ENCODE measurements at regions of chr6 and their contacts with region 1.

Region 1: DNA sequence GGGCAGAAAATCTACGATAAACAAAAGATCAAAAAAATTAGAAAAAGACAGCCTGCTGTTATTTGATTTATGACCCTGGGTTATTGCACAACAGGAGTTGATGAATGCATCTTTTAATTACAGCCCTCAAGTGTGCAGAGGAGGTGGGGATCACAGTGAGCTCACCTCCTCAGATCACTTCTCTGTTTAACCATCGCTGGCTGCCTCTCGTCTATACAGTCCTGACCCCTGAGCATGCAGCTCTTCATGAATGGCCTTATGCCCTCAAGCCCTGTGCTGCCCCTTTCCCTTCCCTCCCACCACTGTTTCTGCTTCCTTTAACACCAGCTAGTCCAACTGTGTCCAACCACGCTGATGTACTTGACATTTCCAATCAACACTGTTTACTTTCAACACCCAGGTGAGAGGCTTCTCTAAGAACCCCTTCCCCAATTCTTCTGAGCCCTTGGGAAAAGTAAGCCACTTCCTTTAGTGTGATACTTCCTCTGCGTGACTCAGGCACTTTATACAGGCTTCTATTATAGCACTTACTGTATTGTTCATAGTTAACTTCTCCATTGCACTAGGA is 60.6 kb upstream of the RIPOR2 start:
- DNase-seq: no peak
- H3K4me3 ChIP-seq: no peak overlapping the region
- H3K27ac ChIP-seq: no peak overlapping the region
- H3K4me1 ChIP-seq: no peaks in the 10 kb centered on the region
- H3K27me3 ChIP-seq: no peaks in the 10 kb centered on the region
- CTCF ChIP-seq: no peak
- POLR2A ChIP-seq: no peak

Region 2: DNA sequence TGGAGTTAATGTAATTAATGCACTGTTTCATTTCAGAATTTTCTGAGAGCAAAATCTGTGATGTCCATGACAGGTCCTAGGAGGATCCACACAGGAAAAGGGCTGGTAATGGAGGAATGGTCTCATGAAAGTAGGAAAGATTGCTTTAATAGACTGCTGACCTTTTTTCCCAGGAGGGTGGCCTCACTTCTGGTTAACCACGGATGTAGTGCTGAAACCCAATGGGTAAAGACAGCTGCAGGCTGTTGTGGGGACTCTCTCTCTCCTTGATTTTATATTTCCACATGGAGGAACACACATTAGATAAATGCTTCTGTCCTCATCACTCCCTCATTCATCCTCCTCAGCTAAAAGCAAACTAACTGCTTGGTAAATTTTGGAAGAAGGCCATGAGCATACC is 37.0 kb before region 1 on chr6:
- intact Hi-C with region 1: loop called (anchors 2 kb)
- DNase-seq: no peak
- H3K4me3 ChIP-seq: no peak overlapping the region
- H3K27ac ChIP-seq: no peak overlapping the region
- H3K4me1 ChIP-seq: no peaks in the 10 kb centered on the region
- H3K27me3 ChIP-seq: no peaks in the 10 kb centered on the region
- CTCF ChIP-seq: no peak
- POLR2A ChIP-seq: no peak